Dendritic cell treated with granulocyte-macrophage colony-stimulating factor and Interleukin-4, amounts not matched to agents 40 ng/mL and 50 ng/mL, for 4 days (primary cell): ENCODE measurements at regions of chr14 and their contacts with region 1.

Region 1: DNA sequence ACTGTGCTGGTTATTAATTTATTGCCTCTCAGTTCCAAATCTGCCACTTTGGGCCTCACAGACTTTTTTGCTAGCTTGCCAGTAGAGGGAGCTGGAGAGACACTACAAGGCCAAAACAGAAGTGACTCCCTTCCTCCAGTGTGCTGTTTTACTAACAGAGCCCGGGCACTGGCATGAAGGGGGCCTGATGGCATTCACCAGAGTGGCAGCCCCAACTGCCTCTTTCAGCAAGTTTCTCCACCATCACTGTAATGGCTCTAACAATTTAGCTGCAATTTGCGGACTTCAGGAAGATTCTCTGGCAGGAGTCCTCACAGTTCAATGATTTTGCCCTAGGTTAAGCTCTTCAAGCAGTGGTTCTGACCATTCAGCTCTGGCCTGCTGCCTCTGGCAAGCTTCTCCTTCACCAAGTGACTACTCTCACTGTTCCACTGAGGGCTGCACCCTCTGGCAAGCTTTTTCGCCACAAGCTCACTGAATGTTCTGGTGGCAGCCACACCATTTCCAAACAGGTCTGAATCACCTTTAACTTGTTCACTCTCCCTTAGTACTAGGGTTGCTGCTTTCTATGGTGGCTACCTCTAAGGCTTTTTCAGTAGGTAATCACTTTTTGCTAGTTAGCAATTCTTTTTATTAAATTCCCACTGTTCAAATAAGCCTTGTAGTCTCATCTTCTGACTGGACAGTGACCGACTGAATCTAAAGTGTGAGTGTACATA is 104.9 kb downstream of the ZC3H14 start:
- H3K4me3 Mint-ChIP-seq: no peak overlapping the region
- H3K27ac Mint-ChIP-seq: peak overlapping the region; percentile 63
- H3K4me1 Mint-ChIP-seq: peaks cover 20% of the 10 kb centered on the region
- H3K27me3 Mint-ChIP-seq: peaks cover 6% of the 10 kb centered on the region

Region 2: GRCh38 chr14:88792572-88793258 is 125.0 kb after region 1 on chr14 and contains the start of gene EML5:
- intact Hi-C with region 1: loop called (anchors 10 kb)
- H3K4me3 Mint-ChIP-seq: peak within 1 kb of the TSS; percentile 78
- H3K27ac Mint-ChIP-seq: no peak within 1 kb of the TSS
- H3K4me1 Mint-ChIP-seq: peaks cover 6% of the 10 kb centered on the region
- H3K27me3 Mint-ChIP-seq: peaks cover 47% of the 10 kb centered on the region

Region 3: DNA sequence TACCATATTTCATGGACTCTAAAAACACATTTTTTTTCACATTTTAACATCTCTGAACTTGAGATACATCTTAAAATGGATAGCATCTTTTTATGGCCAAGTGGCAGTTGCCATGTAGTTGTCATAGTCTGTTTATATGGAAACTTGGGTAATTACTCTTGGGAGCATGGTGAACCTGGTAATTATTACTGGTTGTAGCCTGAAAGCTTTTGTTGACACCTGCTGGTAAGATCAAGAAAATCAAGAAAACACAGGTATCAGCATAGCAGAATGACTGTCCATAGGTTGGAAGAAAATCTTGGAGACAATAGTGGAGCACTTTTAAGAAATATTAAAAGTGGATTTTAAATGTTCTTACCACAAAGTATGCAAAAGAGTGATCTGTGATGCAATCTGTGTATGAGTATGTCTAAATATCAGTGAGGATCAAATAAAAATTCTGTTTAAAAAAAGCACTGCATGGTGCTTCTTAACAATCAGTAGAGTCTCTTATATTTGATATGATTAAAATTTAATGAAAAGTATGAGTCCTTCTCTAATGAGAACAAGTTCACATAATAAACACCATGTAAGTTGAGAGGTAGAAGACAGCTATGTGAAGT is 200.9 kb after region 1 on chr14:
- intact Hi-C with region 1: loop called (anchors 2 kb)
- H3K4me3 Mint-ChIP-seq: no peak overlapping the region
- H3K27ac Mint-ChIP-seq: no peak overlapping the region
- H3K4me1 Mint-ChIP-seq: no peaks in the 10 kb centered on the region
- H3K27me3 Mint-ChIP-seq: no peaks in the 10 kb centered on the region

Region 4: GRCh38 chr14:88904864-88905263 is 237.2 kb after region 1 on chr14:
- intact Hi-C with region 1: no loop called
- H3K4me3 Mint-ChIP-seq: no peak overlapping the region
- H3K27ac Mint-ChIP-seq: no peak overlapping the region
- H3K4me1 Mint-ChIP-seq: no peaks in the 10 kb centered on the region
- H3K27me3 Mint-ChIP-seq: peaks cover 5% of the 10 kb centered on the region

Region 5: DNA sequence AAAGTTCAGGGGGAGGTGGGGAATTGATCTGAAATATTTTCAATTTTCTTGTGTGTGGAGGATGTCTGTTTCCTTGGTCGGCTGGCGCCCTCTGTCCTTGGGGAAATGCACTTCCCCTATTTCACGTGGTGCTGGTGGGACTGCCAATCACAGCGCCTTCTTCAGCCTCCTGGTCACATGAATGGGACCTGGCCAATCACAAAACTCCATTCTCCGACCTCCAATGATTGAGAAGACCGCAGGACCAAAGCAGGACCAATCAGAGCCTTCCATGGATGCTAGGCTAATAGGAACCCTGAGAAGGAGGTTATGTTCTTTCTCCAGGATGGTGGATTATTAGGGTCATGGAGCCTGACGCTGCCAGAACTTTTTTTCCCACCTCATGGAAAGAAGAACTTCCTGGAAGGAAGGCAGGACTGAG is 345.4 kb after region 1 on chr14:
- intact Hi-C with region 1: loop called (anchors 10 kb)
- H3K4me3 Mint-ChIP-seq: no peak overlapping the region
- H3K27ac Mint-ChIP-seq: no peak overlapping the region
- H3K4me1 Mint-ChIP-seq: peaks cover 13% of the 10 kb centered on the region
- H3K27me3 Mint-ChIP-seq: peaks cover 4% of the 10 kb centered on the region